ENCODE measurements at regions of chr1 and their contacts with region 1.

Region 1: DNA sequence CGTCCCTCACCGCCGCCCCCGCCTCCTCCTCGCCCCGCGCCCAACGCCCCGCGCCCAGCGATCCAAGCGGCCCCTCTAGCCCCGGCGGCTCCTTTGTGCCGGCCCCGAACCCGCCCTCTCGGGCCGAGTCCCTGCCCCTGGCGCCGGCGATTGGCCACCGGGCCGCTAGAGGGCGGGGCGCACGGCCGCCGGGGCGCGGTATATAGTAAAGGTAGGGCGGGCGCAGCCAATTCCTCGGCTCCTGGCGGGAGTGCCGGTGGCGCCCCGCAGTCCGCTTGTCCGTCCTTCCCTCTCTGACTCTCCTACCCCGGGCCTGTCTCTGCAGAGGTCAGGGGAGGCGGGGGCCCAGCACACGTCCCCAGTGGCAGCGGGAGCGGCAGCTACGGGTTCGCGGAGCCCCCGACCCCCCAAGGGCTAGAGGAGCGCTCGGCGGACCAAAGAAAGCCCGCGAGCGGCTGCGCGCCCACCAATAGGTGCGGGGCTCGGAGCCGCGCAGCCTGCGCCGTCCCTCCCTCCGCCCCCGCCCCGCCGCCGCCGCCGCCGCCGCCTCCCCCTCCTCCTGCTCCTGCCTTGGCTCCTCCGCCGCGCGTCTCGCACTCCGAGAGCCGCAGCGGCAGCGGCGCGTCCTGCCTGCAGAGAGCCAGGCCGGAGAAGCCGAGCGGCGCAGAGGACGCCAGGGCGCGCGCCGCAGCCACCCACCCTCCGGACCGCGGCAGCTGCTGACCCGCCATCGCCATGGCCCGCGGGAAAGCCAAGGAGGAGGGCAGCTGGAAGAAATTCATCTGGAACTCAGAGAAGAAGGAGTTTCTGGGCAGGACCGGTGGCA is at the start of gene ATP1B1:
- DNase-seq: peak; percentile 54 to 92
- H3K4me3 ChIP-seq: peak within 1 kb of the TSS; percentile 60 to 96
- H3K27ac ChIP-seq: peak within 1 kb of the TSS; percentile 74 to 80
- H3K4me1 ChIP-seq: peaks cover 2 to 11% of the 10 kb centered on the region in 2 donors
- H3K27me3 ChIP-seq: no peaks in the 10 kb centered on the region
- CTCF ChIP-seq: peak; percentile 38 to 55 (median 54)
- total RNA-seq, gene ATP1B1: 3.5 TPM

Region 2: DNA sequence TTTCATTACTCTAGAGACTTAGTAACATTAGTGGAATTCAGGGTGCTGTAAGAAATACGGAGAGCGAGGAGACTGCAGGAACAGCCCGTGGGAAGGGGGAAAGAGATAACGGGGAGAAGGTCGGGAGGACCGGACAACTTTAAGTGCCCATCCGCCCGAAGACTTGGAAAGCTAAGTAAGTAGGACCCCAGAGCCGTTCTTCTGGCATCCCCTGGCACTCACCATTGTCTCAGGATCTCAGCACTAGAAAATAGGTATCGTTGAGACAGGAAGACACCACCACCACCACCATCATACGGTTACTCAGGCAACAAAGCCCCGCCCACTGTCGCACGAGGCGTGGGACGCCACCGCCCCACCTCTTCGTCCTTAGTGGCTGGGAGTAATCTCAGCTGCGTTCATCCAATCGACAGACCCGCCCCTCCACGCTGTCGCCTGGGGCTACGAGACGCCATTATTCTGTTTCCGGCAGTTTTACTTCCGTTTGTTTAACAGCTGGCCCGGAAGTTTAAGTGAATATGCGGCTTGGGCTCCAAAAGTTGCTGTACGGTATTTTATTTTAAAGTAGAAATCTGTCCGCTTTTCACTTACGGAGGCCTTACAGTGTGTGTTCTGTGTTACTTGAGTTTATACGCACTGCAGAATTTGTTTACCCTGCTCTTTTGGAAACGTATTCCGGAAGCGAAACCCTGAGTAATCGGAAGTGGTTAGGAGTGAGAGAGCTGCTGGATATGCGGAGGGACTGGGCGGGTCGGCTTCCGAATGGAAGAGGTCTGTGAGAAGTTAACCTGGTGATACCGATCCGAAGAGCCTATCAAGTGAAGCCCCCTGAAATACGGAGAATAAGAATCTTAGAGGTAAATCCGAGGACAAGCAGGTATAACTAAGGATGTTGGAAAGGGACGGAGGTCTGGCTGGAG is 261.4 kb after region 1 on chr1 and contains the starts of genes BLZF1 and NME7:
- intact Hi-C with region 1: loop called (anchors 5 kb)
- DNase-seq: peak; percentile 95 to 98
- H3K4me3 ChIP-seq: peak within 1 kb of the TSS; percentile 84 to 90
- H3K27ac ChIP-seq: peak within 1 kb of the TSS; percentile 64 to 80
- H3K4me1 ChIP-seq: peaks cover 0 to 6% of the 10 kb centered on the region in 2 donors
- H3K27me3 ChIP-seq: no peaks in the 10 kb centered on the region
- CTCF ChIP-seq: no peak
- total RNA-seq, gene BLZF1: 8.5 TPM
- total RNA-seq, gene NME7: 4.9 TPM

Region 3: GRCh38 chr1:169529068-169529696 is 422.9 kb after region 1 on chr1:
- intact Hi-C with region 1: no loop called
- DNase-seq: no peak
- H3K4me3 ChIP-seq: no peak overlapping the region
- H3K27ac ChIP-seq: no peak overlapping the region
- H3K4me1 ChIP-seq: no peaks in the 10 kb centered on the region
- H3K27me3 ChIP-seq: no peaks in the 10 kb centered on the region
- CTCF ChIP-seq: no peak

Region 4: DNA sequence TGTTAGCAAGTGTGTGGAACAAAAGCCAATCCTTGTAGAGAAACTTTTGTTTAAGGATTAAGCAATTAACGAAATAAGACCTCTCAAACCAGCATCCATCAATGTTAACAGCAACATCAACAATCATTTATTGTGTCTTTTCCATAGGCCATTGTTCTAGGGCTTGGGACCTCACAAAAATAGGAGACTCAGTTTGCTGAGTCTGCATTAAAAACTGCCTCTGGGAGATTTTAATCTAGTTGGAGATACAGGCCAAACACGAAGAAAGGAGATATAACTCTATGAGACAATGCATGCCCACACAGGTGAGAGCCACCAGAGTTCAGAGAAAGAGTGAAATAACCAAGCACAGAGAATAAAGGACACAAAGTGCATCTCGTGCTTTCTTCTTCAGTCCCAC is 538.0 kb after region 1 on chr1:
- intact Hi-C with region 1: no loop called
- DNase-seq: no peak
- H3K4me3 ChIP-seq: no peak overlapping the region
- H3K27ac ChIP-seq: no peak overlapping the region
- H3K4me1 ChIP-seq: no peaks in the 10 kb centered on the region
- H3K27me3 ChIP-seq: no peaks in the 10 kb centered on the region
- CTCF ChIP-seq: no peak

Region 5: GRCh38 chr1:170881268-170882265 is 1775.3 kb after region 1 on chr1:
- intact Hi-C with region 1: no loop called
- DNase-seq: no peak
- H3K4me3 ChIP-seq: peak overlapping the region in 1 of 2 donors; percentile 45
- H3K27ac ChIP-seq: no peak overlapping the region
- H3K4me1 ChIP-seq: peaks cover 0 to 9% of the 10 kb centered on the region in 2 donors
- H3K27me3 ChIP-seq: no peaks in the 10 kb centered on the region
- CTCF ChIP-seq: peak; percentile 38 to 72 (median 64)